ENCODE measurements at regions of chr15 and their contacts with region 1.

Region 1: GRCh38 chr15:65184868-65185738 is at the start of gene CLPX:
- DNase-seq: peak; percentile 84 to 91
- H3K4me3 ChIP-seq: peak within 1 kb of the TSS; percentile 84 to 93 (median 92)
- H3K27ac ChIP-seq: peak within 1 kb of the TSS; percentile 97 to 98
- H3K4me1 ChIP-seq: no peaks in the 10 kb centered on the region
- H3K27me3 ChIP-seq: no peaks in the 10 kb centered on the region
- CTCF ChIP-seq: no peak
- POLR2A ChIP-seq: peak; percentile 44
- total RNA-seq, gene CLPX: 47.5 to 71.9 (median 51.8) TPM

Region 2: GRCh38 chr15:65292938-65293518 is 107.9 kb after region 1 on chr15:
- intact Hi-C with region 1: loop called (anchors 10 kb)
- DNase-seq: no peak
- H3K4me3 ChIP-seq: no peak overlapping the region
- H3K27ac ChIP-seq: no peak overlapping the region
- H3K4me1 ChIP-seq: no peaks in the 10 kb centered on the region
- H3K27me3 ChIP-seq: no peaks in the 10 kb centered on the region
- CTCF ChIP-seq: no peak
- POLR2A ChIP-seq: no peak

Measured in breast epithelium (tissue), 4 donors.